ENCODE measurements at regions of chr5 and their contacts with region 1.

Region 1: GRCh38 chr5:176817841-176818377 is 7.5 kb downstream of the UNC5A start:
- DNase-seq: no peak
- H3K4me3 ChIP-seq: peak overlapping the region; percentile 20 to 62 (median 39)
- H3K27ac ChIP-seq: no peak overlapping the region
- H3K4me1 ChIP-seq: no peaks in the 10 kb centered on the region
- H3K27me3 ChIP-seq: peaks cover 8 to 78% of the 10 kb centered on the region in 2 donors
- CTCF ChIP-seq: no peak
- POLR2A ChIP-seq: no peak

Region 2: DNA sequence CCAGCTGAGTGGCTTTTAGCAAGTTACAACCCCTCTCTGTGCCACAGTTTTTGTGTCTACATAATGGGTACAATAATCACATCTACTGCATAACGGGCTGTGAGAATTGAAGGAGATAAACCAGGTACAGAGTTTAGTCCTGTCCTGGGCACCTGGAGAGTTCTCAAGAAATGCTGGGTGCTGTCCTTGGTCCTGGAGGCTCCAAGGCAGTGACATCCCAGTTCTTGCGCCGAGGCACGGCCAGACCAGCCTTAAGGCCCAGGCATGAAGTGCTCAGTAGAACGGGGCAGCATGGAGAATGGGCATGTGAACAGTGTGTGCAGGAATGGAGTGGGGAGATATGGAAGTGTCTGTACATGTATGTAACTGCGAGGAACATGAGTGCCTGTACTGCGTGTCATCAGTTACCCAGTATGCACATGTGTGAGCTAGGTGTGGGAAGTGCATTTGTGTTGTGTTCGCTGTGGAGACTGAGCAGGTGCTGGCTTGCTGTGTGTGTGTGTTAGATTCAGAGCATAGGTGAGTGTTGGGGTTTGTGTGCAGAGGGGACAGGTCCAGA is 13.9 kb before region 1 on chr5:
- intact Hi-C with region 1: no loop called
- DNase-seq: no peak
- H3K4me3 ChIP-seq: no peak overlapping the region
- H3K27ac ChIP-seq: no peak overlapping the region
- H3K4me1 ChIP-seq: no peaks in the 10 kb centered on the region
- H3K27me3 ChIP-seq: peaks cover 0 to 68% of the 10 kb centered on the region in 2 donors
- CTCF ChIP-seq: no peak
- POLR2A ChIP-seq: no peak

Region 3: GRCh38 chr5:178249191-178249989 is 1431.5 kb after region 1 on chr5:
- intact Hi-C with region 1: loop called (anchors 5 kb)
- DNase-seq: no peak
- H3K4me3 ChIP-seq: no peak overlapping the region
- H3K27ac ChIP-seq: no peak overlapping the region
- H3K4me1 ChIP-seq: no peaks in the 10 kb centered on the region
- H3K27me3 ChIP-seq: peaks cover 0 to 7% of the 10 kb centered on the region in 2 donors
- CTCF ChIP-seq: no peak
- POLR2A ChIP-seq: no peak

Measured in breast epithelium (tissue), 4 donors.